Ascending aorta (tissue), 2 donors: ENCODE measurements at regions of chr17 and their contacts with region 1.

Region 1: DNA sequence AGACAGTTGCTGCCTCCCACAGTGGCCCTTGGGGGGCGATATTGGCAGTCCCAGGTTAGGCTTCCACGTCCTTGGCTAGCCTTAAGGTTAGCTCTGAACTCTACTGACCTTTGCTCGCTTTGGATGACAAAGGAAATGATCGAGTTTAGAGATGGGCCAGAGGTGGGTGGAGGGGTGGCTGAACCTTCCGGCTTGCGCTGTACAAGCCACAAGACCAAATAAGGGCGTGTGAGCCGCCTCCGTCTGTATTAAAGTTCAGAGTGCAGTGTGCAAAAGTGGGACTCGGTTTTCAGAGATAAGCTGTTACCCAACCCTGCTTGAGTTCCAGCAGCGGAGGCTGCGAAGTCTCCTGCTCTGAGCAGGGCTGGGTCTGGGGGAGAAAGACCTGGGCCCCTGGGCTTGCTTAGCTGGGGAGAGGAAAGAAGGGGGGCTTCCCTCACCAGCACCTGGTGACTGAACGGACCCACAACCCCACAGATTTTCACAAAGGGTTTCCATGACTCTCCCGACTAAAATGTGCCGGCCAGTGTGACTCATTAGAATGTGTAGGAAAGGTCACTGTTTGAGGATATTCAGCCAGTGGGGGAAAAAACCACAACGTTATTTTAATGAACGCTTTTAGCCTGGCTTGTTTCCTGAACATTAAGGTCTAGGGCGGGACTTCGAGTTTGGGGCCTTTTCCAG is 67.2 kb downstream of the CENPV start:
- DNase-seq: peak; percentile 73 to 93
- H3K4me3 ChIP-seq: peak overlapping the region; percentile 39 to 48
- H3K27ac ChIP-seq: peak overlapping the region; percentile 98 to 100
- H3K4me1 ChIP-seq: peaks cover 18 to 41% of the 10 kb centered on the region in 2 donors
- H3K27me3 ChIP-seq: no peaks in the 10 kb centered on the region
- CTCF ChIP-seq: peak in 2 of 3 experiments; percentile 32 to 41

Region 2: DNA sequence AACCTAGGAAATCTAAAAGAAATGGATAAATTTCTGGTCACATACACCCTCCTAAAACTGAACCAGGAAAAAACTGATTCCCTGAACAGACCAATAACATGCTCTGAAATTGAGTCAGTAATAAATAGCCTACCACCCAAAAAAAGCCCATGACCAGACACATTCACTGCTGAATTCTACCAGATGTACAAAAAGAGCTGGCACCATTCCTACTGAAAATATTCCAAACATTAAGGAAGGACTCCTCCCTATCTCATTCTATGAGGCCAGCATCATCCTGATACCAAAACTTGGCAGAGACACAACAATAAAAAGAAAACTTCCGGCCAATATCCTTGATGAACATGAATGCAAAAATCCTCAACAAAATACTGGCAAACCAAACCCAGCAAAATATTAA is 233.6 kb before region 1 on chr17:
- intact Hi-C with region 1: no loop called
- DNase-seq: no peak
- H3K4me3 ChIP-seq: no peak overlapping the region
- H3K27ac ChIP-seq: no peak overlapping the region
- H3K4me1 ChIP-seq: no peaks in the 10 kb centered on the region
- H3K27me3 ChIP-seq: no peaks in the 10 kb centered on the region
- CTCF ChIP-seq: no peak

Region 3: GRCh38 chr17:16158714-16159113 is 127.4 kb before region 1 on chr17:
- intact Hi-C with region 1: no loop called
- DNase-seq: no peak
- H3K4me3 ChIP-seq: no peak overlapping the region
- H3K27ac ChIP-seq: no peak overlapping the region
- H3K4me1 ChIP-seq: peaks cover 0 to 3% of the 10 kb centered on the region in 2 donors
- H3K27me3 ChIP-seq: no peaks in the 10 kb centered on the region
- CTCF ChIP-seq: no peak

Region 4: GRCh38 chr17:16199093-16199492 is 87.0 kb before region 1 on chr17:
- intact Hi-C with region 1: no loop called
- DNase-seq: no peak
- H3K4me3 ChIP-seq: no peak overlapping the region
- H3K27ac ChIP-seq: peak overlapping the region; percentile 5 to 62
- H3K4me1 ChIP-seq: peaks cover 3 to 25% of the 10 kb centered on the region in 2 donors
- H3K27me3 ChIP-seq: no peaks in the 10 kb centered on the region
- CTCF ChIP-seq: no peak

Region 5: DNA sequence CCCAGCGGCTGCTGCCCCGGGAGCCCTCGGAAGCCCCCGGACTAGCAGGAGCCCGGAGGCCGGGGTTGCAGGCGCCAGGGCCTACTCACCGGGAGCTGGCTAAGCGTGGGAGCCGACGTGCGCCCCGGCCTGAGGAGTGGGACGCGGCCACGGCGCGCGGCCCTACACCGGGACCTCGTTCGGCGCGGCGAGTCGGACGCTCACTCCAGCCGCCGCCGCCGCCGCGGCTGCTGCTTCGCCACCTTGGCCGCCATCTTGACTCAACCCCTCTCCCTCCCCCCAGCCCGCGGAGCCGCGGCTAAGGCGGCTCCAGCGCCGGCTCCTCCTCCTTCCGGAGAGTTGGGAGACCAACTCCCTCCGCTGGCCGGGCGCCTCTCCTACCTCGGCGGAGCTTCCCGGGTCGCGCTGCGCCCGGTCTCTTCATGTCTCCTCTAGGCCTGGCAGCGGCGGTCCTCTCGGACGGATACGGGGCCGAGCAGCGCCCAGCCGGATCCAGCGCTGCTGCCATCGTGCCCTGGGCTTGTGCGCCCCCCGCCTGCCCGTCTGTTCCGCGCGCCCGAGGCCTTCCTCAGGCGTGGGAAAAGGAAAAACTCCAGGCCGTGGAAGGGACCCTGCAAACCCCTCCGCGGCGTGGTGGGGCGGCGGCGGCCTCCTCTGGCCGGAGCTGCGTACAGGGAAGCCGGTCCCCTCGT is 70.7 kb before region 1 on chr17 and contains the start of gene NCOR1:
- intact Hi-C with region 1: loop called (anchors 1 kb)
- DNase-seq: peak; percentile 41 to 95
- H3K4me3 ChIP-seq: peak within 1 kb of the TSS; percentile 84 to 97
- H3K27ac ChIP-seq: peak within 1 kb of the TSS; percentile 95 to 98
- H3K4me1 ChIP-seq: peaks cover 0 to 12% of the 10 kb centered on the region in 2 donors
- H3K27me3 ChIP-seq: no peaks in the 10 kb centered on the region
- CTCF ChIP-seq: peak; percentile 6 to 52 (median 36)
- total RNA-seq, gene NCOR1: 81.0 TPM

Region 6: GRCh38 chr17:16255481-16255921 is 30.6 kb before region 1 on chr17:
- intact Hi-C with region 1: loop called (anchors 2 kb)
- DNase-seq: peak in 1 of 2 donors; percentile 86
- H3K4me3 ChIP-seq: peak overlapping the region; percentile 30 to 35
- H3K27ac ChIP-seq: peak overlapping the region; percentile 58 to 59
- H3K4me1 ChIP-seq: peaks cover 0 to 10% of the 10 kb centered on the region in 2 donors
- H3K27me3 ChIP-seq: no peaks in the 10 kb centered on the region
- CTCF ChIP-seq: no peak

Region 7: GRCh38 chr17:16322636-16323035 is 36.5 kb after region 1 on chr17:
- intact Hi-C with region 1: no loop called
- DNase-seq: no peak
- H3K4me3 ChIP-seq: no peak overlapping the region
- H3K27ac ChIP-seq: no peak overlapping the region
- H3K4me1 ChIP-seq: no peaks in the 10 kb centered on the region
- H3K27me3 ChIP-seq: no peaks in the 10 kb centered on the region
- CTCF ChIP-seq: no peak

Region 8: DNA sequence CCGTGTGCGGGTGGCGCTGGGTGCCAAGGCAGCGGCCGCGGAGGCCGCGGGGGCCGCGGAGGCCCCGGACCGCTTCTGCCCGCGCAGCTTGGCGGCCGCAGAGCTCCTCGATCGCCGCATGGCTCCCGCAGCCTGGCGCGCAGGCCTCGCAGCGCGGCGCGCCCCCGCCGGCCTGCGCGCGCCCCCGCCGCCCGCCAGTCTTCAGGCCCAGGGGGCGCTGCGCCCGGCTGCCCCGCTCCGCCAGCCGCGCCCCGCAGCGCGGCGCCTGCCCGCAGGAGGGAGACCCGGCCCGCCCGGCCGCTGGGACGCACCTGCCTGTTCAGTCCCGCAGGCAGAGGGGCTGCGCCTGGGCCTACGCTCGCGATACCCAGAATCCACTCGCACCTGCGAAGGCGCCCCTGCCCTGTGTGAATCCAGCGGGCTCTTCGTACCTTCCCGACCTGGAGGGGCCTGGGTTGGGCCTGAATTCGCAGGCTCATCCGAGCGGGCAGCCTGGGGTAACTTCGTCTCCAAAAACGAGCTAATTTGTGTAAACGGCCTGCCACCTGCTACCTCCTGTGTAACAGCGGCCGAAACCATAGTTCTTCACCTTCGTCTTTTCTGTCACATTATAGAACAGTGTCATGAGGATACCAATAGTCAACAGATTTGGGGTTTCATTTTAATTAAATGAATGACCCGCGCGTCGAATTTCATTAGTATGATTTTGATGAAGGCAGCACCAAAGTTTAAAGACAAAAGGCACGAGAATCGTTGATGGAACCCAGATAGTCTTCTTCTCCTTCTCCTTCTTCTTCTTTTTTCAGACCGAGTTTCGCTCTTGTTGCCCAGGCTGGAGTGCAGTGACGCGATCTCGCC is 67.4 kb after region 1 on chr17 and contains the start of gene CENPV:
- intact Hi-C with region 1: loop called (anchors 2 kb)
- DNase-seq: peak in 1 of 2 donors; percentile 65
- H3K4me3 ChIP-seq: peak within 1 kb of the TSS; percentile 92 to 99
- H3K27ac ChIP-seq: peak within 1 kb of the TSS; percentile 63 to 73
- H3K4me1 ChIP-seq: peaks cover 0 to 10% of the 10 kb centered on the region in 2 donors
- H3K27me3 ChIP-seq: no peaks in the 10 kb centered on the region
- CTCF ChIP-seq: no peak
- total RNA-seq, gene CENPV: 37.6 TPM

Region 9: DNA sequence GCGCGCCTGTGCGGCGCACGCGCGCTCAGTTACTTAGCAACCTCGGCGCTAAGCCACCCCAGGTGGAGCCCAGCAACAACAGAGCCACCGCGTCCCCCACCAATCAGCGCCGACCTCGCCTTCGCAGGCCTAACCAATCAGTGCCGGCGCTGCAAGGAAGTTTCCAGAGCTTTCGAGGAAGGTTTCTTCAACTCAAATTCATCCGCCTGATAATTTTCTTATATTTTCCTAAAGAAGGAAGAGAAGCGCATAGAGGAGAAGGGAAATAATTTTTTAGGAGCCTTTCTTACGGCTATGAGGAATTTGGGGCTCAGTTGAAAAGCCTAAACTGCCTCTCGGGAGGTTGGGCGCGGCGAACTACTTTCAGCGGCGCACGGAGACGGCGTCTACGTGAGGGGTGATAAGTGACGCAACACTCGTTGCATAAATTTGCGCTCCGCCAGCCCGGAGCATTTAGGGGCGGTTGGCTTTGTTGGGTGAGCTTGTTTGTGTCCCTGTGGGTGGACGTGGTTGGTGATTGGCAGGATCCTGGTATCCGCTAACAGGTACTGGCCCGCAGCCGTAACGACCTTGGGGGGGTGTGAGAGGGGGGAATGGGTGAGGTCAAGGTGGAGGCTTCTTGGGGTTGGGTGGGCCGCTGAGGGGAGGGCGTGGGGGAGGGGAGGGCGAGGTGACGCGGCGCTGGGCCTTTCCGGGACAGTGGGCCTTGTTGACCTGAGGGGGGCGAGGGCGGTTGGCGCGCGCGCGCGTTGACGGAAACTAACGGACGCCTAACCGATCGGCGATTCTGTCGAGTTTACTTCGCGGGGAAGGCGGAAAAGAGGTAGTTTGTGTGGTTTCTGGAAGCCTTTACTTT is 94.8 kb after region 1 on chr17 and contains the start of gene UBB:
- intact Hi-C with region 1: loop called (anchors 2 kb)
- DNase-seq: peak; percentile 92 to 97
- H3K4me3 ChIP-seq: peak within 1 kb of the TSS; percentile 82 to 83
- H3K27ac ChIP-seq: peak within 1 kb of the TSS; percentile 90 to 94
- H3K4me1 ChIP-seq: peaks cover 8 to 15% of the 10 kb centered on the region in 2 donors
- H3K27me3 ChIP-seq: no peaks in the 10 kb centered on the region
- CTCF ChIP-seq: no peak
- total RNA-seq, gene UBB: 615 TPM